Psoas muscle (tissue), 8 donors: ENCODE measurements at regions of chr22 and their contacts with region 1.

Region 1: DNA sequence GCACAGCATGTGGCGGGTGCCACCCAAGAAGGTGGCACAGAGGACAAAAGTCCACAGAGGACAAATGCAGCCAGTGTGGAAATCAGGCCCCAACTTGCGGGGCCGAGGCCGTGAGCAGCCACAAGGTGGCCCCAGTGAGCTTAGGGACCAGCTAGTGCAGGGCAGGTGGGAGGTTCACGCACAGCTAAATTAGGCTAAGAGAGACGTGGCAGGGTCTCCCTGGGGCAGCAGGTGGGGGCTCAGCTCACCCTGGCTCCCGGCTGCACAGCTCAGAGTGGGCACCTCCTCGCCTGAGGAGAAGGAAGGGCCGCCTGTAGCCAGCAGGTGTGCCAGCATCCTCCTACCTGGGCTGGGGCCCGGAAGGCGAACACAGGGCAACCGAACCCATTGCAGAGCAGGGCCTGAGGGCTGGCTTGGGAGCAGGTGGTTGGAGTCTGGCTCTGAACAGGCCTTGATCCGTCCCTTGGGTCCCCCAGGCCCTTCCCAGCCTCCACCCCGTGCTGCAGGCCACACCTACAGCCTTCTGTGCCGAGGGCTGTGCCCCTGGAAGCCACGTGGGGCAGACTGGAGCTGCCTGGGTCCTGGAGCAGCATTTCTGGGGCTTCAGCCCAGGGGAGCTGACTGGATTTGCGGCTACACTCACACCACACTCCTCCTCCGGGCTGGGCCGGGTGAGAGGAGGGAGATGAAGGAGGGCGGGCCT is 26.1 kb upstream of the CELSR1 start:
- DNase-seq: peak; percentile 77 to 88
- ATAC-seq: peak; percentile 89 to 94 (median 90)
- H3K4me3 ChIP-seq: peak overlapping the region; percentile 8
- H3K27ac ChIP-seq: no peak overlapping the region
- H3K4me1 ChIP-seq: no peaks in the 10 kb centered on the region
- H3K27me3 ChIP-seq: no peaks in the 10 kb centered on the region
- CTCF ChIP-seq: peak; percentile 75

Region 2: DNA sequence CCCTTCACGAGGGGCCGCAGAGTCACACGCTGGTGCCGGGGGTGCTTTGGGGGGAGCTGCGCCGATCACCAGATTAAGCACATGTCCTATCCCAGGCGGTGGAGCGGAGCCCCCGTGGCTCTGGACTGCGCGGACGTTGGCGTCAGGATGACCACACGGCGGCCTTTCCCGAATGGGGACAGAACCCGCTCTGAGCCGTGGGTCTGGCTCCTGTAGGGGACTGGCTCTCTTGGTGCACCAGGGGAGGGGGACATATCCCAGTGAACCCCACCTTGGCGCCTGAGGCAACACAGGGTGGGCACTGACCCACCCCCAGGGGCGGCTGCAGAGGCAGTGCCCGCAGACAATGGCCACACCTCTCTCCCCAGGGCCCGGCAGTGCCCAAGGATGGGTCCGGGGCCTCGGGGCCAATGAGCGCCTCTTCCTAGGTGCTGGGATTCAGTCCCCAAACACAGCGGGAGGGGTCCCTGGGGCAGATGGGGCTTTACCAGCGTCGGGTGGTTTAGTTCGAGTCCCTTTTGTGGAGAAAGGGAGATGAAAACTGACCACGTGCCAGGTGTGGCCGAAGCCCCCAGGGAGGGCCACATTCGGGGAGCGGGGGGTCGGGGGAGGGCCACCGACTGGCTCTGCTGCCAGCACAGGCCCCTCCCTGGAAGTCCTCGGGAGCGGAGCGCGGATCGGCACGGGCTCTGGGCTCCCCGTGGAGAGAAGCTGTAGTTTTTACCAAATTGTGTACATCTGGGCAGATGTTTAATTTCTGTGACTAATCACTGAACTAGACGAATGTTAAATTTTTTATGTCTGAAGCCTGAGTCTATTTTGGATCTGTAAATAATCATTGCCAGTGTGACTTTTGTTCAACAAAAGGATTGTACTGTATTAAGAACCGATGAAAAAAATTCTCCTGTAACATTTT is 115.5 kb after region 1 on chr22:
- intact Hi-C with region 1: loop called in 1 of 2 experiments (anchors 5 kb)
- DNase-seq: no peak
- ATAC-seq: no peak
- H3K4me3 ChIP-seq: no peak overlapping the region
- H3K27ac ChIP-seq: no peak overlapping the region
- H3K4me1 ChIP-seq: peaks cover 11% of the 10 kb centered on the region
- H3K27me3 ChIP-seq: no peaks in the 10 kb centered on the region
- CTCF ChIP-seq: no peak